Ascending aorta (tissue), 2 donors: ENCODE measurements at regions of chr12 and their contacts with region 1.

Region 1: DNA sequence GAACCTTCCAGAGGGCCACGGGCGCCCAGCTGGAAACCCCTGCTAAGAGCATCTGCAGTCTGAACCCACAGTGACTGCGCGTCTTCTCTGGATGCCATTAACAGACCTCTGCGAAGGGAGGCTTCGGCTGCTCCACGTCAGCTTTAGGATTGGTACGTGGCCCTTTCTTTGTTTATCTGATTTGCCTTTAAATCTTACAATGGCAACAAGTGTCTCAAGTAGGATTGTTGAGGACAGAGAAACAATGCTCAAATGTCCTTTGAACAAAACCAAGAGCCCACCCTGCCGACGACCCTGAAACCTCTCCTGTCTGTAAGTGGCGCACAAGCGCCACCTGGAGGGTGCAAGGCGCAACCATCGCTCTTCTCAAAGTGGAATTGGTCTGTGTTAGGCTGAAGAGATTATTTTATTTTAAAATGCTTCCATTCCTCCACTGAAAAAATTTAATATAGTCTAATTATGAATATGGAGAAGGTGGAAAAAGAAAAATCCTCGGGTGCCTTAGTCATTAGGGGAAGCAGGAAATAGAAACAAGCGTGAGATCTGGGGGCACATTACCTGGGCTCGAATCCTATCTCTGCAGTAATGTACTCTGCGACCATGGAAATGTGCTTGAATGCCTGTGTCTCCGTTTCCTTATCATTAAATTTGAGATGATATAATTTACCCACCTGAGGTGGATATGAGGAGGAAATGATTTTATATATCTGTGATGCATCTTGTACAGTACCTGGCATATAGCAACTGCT is 82.6 kb upstream of the PTPRB start:
- DNase-seq: no peak
- H3K4me3 ChIP-seq: peak overlapping the region in 1 of 2 donors; percentile 37
- H3K27ac ChIP-seq: no peak overlapping the region
- H3K4me1 ChIP-seq: no peaks in the 10 kb centered on the region
- H3K27me3 ChIP-seq: no peaks in the 10 kb centered on the region
- CTCF ChIP-seq: peak; percentile 51 to 79 (median 64)

Region 2: DNA sequence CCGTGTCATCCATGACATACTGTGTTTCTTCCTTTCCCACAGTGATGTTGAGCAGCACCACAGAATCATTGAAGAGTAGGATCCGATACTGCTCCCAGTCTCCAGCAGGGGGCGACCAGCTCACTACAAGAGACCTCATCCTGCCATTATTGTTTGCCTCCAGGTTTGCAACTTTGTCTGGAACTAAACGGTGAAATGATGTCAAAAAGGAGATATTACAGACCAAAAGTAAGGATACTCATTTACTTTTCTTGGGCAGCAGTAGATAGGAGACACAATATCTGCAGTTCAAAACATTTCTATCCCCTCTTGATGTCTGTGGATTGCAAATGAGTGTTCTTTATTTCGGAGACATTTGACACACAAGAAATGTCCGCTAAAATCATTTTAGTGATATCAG is 129.8 kb before region 1 on chr12:
- intact Hi-C with region 1: loop called (anchors 2 kb)
- DNase-seq: peak; percentile 14 to 74
- H3K4me3 ChIP-seq: no peak overlapping the region
- H3K27ac ChIP-seq: no peak overlapping the region
- H3K4me1 ChIP-seq: no peaks in the 10 kb centered on the region
- H3K27me3 ChIP-seq: no peaks in the 10 kb centered on the region
- CTCF ChIP-seq: peak; percentile 27 to 78 (median 65)